ENCODE measurements at regions of chr5 and their contacts with region 1.

Region 1: DNA sequence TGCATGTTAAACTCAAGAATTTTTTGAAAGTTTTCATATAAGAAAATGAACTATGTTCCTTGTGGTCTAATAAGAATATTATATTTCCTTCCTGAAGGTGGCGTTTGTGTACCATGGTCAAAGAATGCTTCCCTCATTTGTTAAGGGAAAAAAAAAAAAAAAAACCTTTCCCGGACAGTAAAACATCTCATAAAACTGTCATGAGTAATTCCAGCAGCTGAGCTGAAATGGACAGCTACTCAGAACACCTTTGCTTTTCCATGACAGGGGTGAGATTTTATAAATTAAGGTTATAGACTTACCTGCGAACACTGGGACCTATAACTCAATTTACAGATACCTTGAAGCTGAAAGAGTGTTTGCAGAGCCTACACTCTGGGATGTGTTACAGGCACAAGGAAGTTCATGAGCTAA is 113.2 kb upstream of the RANBP3L start:
- DNase-seq: no peak
- H3K4me3 ChIP-seq: no peak overlapping the region
- H3K27ac ChIP-seq: no peak overlapping the region
- H3K4me1 ChIP-seq: no peaks in the 10 kb centered on the region
- H3K27me3 ChIP-seq: no peaks in the 10 kb centered on the region
- CTCF ChIP-seq: peak in 2 of 3 donors; percentile 35 to 58
- EP300 ChIP-seq: no peak
- POLR2A ChIP-seq: no peak

Region 2: GRCh38 chr5:36478646-36479317 is 63.9 kb after region 1 on chr5:
- intact Hi-C with region 1: no loop called
- DNase-seq: no peak
- H3K4me3 ChIP-seq: no peak overlapping the region
- H3K27ac ChIP-seq: no peak overlapping the region
- H3K4me1 ChIP-seq: no peaks in the 10 kb centered on the region
- H3K27me3 ChIP-seq: no peaks in the 10 kb centered on the region
- CTCF ChIP-seq: no peak
- EP300 ChIP-seq: no peak
- POLR2A ChIP-seq: no peak

Region 3: GRCh38 chr5:36690041-36690961 is 275.4 kb after region 1 on chr5:
- intact Hi-C with region 1: loop called in 3 of 4 experiments (anchors 1 to 10 kb)
- DNase-seq: peak; percentile 67 to 89 (median 79)
- H3K4me3 ChIP-seq: peak overlapping the region; percentile 50
- H3K27ac ChIP-seq: peak overlapping the region; percentile 39 to 69
- H3K4me1 ChIP-seq: no peaks in the 10 kb centered on the region
- H3K27me3 ChIP-seq: no peaks in the 10 kb centered on the region
- CTCF ChIP-seq: peak; percentile 62 to 82 (median 76)
- EP300 ChIP-seq: no peak
- POLR2A ChIP-seq: no peak

Region 4: DNA sequence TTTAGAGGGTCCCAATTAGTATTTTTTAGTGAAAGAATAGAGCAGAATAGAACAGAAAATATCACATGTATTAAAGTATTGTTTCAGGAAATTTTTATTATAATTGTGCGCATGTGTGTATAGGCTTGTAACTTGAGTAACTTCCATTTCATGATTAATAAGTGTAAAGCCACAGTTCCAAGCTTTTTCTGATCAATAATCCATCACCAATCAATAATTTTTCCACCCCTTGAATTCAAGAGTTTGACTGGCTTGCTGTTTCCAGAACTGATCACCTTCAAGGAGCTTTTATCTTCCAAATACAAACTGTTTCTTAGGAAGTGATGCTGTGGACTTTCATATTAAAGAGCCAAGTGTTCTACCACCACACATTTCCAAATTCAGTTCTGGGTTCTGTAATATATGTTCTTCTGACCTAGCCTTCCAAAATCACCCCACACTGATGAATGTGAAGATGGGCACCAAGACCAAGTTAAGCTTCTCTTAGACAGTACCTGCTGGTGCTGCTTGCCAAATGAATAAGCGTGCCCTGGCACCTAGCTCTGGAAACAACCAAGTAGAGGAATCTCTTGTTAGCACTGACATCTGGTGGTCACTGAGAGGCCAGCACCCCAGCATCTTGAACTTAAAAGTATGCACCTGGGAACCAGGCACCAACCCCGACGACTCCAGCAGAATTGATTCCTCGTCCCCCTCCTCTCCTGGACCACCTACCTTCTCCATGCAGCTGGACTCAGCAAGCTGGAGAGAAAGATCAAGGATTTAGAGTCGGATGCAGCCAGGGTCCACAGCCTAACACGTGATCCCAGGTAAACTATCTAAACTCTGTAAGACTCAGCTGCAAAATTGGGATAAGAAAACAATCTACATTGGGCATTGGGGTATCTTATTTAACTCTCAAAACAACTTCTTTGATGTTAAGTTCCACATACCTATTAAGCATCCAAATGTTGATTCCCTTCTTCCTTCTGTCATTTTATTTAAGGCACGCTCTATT is 281.1 kb after region 1 on chr5:
- intact Hi-C with region 1: loop called in 3 of 4 experiments (anchors 1 to 10 kb)
- DNase-seq: peak in 4 of 5 donors; percentile 31 to 54 (median 35)
- H3K4me3 ChIP-seq: no peak overlapping the region
- H3K27ac ChIP-seq: no peak overlapping the region
- H3K4me1 ChIP-seq: no peaks in the 10 kb centered on the region
- H3K27me3 ChIP-seq: no peaks in the 10 kb centered on the region
- CTCF ChIP-seq: peak in 1 of 3 donors; percentile 43
- EP300 ChIP-seq: no peak
- POLR2A ChIP-seq: no peak

Region 5: GRCh38 chr5:36866174-36866573 is 451.3 kb after region 1 on chr5:
- intact Hi-C with region 1: loop called in 1 of 4 experiments (anchors 10 kb)
- DNase-seq: no peak
- H3K4me3 ChIP-seq: no peak overlapping the region
- H3K27ac ChIP-seq: no peak overlapping the region
- H3K4me1 ChIP-seq: no peaks in the 10 kb centered on the region
- H3K27me3 ChIP-seq: no peaks in the 10 kb centered on the region
- CTCF ChIP-seq: no peak
- EP300 ChIP-seq: no peak
- POLR2A ChIP-seq: no peak

Region 6: GRCh38 chr5:36889264-36889663 is 474.4 kb after region 1 on chr5:
- intact Hi-C with region 1: no loop called
- DNase-seq: no peak
- H3K4me3 ChIP-seq: no peak overlapping the region
- H3K27ac ChIP-seq: no peak overlapping the region
- H3K4me1 ChIP-seq: peaks cover 11% of the 10 kb centered on the region
- H3K27me3 ChIP-seq: no peaks in the 10 kb centered on the region
- CTCF ChIP-seq: no peak
- EP300 ChIP-seq: no peak
- POLR2A ChIP-seq: no peak